ENCODE measurements at regions of chr14 and their contacts with region 1.

Region 1: DNA sequence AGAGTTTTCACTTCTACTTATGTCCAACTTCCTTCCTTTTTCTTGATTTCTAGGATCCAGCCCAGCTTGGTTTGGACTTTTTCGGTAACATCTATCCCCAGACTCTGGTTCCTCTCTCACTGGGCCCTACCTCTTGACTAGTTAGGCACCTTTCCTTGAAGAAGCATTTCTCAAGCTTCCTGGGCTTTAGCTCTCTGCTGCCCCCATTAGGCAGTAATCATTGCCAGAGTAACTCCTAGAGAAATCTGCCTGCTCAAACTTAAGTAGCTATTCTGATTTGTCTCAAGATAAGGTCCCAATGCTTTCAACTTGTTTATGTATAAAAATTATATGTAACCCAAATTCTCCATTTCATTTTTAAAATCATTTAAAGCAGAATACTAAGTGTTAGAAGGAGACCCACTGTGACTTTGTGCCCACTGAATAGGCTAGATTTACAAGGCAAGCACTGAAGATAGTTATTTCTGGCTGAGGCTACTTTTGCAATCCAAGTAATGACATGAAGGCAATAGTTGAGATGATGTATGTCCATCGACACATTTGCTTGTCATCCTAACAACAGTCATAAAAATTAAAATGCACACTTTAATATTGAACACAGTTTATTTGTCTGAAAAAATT is 275.0 kb upstream of the G2E3 start:
- DNase-seq: peak; percentile 78
- ATAC-seq: peak; percentile 77
- H3K4me3 ChIP-seq: no peak overlapping the region
- H3K27ac ChIP-seq: no peak overlapping the region
- H3K4me1 ChIP-seq: no peaks in the 10 kb centered on the region
- H3K27me3 ChIP-seq: peaks cover 8% of the 10 kb centered on the region; the same call in 1 of the 2 replicates
- CTCF ChIP-seq: peak; percentile 95

Region 2: GRCh38 chr14:30045720-30046119 is 238.2 kb before region 1 on chr14:
- CTCF ChIA-PET with region 1: interaction called, 14 read pairs
- POLR2A ChIA-PET with region 1: no interaction called
- intact Hi-C with region 1: no loop called
- DNase-seq: no peak
- ATAC-seq: no peak
- H3K4me3 ChIP-seq: no peak overlapping the region
- H3K27ac ChIP-seq: no peak overlapping the region
- H3K4me1 ChIP-seq: no peaks in the 10 kb centered on the region
- H3K27me3 ChIP-seq: peaks cover 3% of the 10 kb centered on the region; the same call in 1 of the 2 replicates
- CTCF ChIP-seq: no peak

Measured in PC-3 (cell line).